ENCODE measurements at regions of chr6 and their contacts with region 1.

Region 1: DNA sequence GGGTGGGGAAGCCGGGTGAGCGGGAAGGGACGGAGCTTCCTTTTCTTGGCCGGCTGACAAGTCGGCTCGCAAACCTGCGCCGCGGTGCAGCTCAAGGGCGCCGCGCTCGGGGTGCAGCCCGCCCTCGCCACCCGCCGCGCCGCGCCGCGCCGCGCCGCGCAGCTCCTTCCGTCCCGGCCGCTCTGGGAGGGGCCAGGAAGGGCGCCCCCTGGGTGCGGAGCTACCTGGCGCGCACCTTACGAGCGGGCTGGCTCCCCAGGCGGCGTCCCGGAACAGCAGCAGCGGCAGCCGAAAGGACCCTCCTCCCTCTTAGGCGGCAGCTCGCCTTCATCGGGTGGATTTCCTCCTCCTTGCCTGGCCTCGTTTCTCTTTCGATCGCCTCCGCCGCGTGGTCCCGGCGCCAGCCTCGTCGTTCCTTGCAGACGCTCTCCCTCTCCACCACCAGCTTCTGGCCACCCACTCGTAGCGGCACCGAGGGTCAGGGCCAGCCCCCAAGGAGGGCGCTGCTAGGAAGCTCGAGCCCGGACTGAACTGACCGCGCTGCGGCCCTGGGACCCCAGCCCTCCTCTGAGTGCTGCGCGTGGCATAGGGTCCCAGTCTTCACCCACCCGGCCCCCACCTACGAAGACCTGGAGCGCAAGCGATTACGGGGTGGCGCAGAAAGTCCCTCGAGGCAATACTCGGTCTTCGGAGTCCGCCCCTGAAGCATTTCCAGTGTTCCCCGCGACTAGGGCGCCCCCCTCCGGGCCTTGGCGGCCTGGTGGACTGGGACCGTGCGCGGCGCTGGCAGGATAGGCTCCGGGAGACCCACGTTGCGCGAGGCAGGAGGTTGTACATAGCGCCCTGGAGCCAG is at the start of gene MAP3K5:
- DNase-seq: peak; percentile 93 to 96
- H3K4me3 ChIP-seq: peak within 1 kb of the TSS; percentile 81 to 87
- H3K27ac ChIP-seq: peak within 1 kb of the TSS; percentile 96 to 98
- H3K4me1 ChIP-seq: peaks cover 0 to 33% (median 14%) of the 10 kb centered on the region in 4 donors
- H3K27me3 ChIP-seq: no peaks in the 10 kb centered on the region
- CTCF ChIP-seq: peak; percentile 75 to 81

Region 2: GRCh38 chr6:136582711-136583471 is 209.7 kb before region 1 on chr6:
- intact Hi-C with region 1: loop called (anchors 2 kb)
- DNase-seq: no peak
- H3K4me3 ChIP-seq: no peak overlapping the region
- H3K27ac ChIP-seq: peak overlapping the region; percentile 80 to 86
- H3K4me1 ChIP-seq: peaks cover 6 to 56% (median 29%) of the 10 kb centered on the region in 4 donors
- H3K27me3 ChIP-seq: no peaks in the 10 kb centered on the region
- CTCF ChIP-seq: peak; percentile 60 to 82

Region 3: GRCh38 chr6:136643850-136644596 is 148.6 kb before region 1 on chr6:
- intact Hi-C with region 1: loop called (anchors 1 kb)
- DNase-seq: peak; percentile 94 to 96
- H3K4me3 ChIP-seq: no peak overlapping the region
- H3K27ac ChIP-seq: peak overlapping the region; percentile 60 to 66
- H3K4me1 ChIP-seq: peaks cover 0 to 54% (median 23%) of the 10 kb centered on the region in 4 donors
- H3K27me3 ChIP-seq: no peaks in the 10 kb centered on the region
- CTCF ChIP-seq: peak; percentile 88 to 93